ENCODE measurements at regions of chr5 and their contacts with region 1.

Region 1: DNA sequence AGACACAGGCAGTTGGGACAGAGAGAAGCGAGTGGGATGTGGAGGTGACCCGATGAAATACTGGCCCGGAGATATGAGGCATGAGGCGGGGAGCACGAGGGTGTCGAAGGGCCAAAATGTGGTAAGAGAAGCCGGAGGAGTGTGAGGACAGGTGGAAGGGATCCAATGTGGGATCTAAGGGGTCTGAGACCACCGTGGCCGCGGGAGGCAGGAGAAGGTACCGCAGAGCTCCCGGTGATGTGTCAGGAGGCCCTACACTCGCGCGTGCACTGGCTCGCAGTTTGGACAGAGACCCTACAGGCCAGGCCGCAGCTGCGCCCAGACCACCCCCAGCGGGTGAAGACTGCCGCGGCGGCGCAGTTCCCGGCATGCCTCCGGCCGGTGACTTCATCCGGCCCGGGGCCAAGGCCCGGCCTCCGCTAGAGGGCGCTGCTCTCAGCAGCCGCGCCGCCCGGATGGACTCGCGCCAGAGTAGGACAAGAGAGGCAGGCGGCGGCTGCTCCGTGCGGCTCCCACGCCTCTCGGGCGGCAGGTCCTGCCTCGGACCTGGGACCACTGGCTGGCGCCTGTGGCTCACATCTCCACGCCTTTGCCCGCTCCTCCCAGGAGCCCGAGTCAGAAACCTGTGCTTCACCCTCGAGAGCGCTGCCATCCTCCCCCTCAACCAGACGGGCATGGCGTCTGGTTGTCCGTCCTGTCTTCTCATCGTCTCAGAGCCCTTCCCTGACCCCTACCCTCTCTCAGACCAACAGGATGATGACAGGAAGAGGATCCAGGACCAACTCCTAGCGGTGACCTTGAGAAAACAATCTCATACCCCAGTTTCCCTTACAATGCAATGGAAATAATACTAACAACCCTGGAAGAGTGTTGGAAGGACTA is 35.4 kb upstream of the STING1 start:
- DNase-seq: peak; percentile 95
- ATAC-seq: peak; percentile 95 to 97
- H3K4me3 ChIP-seq: peak overlapping the region; percentile 66
- H3K27ac ChIP-seq: peak overlapping the region; percentile 91
- H3K4me1 ChIP-seq: peaks cover 14% of the 10 kb centered on the region
- H3K27me3 ChIP-seq: no peaks in the 10 kb centered on the region
- CTCF ChIP-seq: peak; percentile 99

Region 2: GRCh38 chr5:139422307-139422893 is 95.5 kb before region 1 on chr5:
- intact Hi-C with region 1: loop called (anchors 10 kb)
- DNase-seq: no peak
- ATAC-seq: peak; percentile 86 to 87
- H3K4me3 ChIP-seq: no peak overlapping the region
- H3K27ac ChIP-seq: no peak overlapping the region
- H3K4me1 ChIP-seq: peaks cover 20% of the 10 kb centered on the region
- H3K27me3 ChIP-seq: no peaks in the 10 kb centered on the region
- CTCF ChIP-seq: peak; percentile 86

Measured in lower lobe of right lung (tissue), 2 donors.